ENCODE measurements at regions of chr11 and their contacts with region 1.

Region 1: DNA sequence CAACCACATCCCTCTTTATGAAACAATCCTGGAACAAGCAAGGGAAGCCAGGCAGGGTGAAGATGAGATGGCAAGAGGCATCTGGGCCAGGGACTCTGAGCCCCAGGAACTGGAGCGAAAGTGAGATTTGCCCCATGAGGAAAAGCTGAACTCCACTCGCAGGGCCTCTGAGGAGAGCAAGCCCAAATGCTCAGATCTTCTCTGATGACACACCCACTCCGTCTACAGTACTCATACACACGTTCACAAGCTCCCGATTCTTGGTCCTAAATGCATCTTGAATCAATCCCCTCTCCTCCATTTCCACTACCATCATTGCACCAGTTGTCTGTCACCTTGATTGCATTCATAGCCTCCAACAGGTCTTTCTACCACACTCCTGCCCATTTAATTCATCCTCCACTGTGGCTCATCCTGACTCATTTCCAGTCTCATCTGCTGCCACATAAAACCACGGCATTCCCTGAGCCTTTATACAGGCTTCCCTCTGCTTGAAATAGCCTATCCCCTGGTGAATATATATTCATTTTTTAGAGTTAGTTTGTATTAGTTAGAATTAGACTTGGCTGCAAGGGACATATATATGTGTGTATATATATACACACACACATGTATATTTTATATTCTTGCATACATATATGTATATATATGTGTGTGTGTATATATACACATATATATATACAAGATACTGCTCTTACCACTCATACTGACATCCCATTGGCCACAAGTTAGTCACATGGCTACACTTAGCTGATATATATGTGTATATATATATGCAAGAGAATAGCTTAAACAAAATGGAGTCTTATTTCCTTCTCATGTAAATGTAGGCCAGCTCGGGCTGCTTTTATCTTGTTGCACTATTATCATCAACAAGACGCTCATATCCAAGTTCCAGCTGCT is 1.4 kb upstream of the APOA5 start:
- DNase-seq: peak; percentile 73
- ATAC-seq: peak; percentile 21; the same call in 1 of the 2 replicates
- H3K4me3 ChIP-seq: no peak overlapping the region
- H3K27ac ChIP-seq: no peak overlapping the region
- H3K4me1 ChIP-seq: peaks cover 4% of the 10 kb centered on the region
- H3K27me3 ChIP-seq: no peaks in the 10 kb centered on the region
- CTCF ChIP-seq: no peak
- POLR2A ChIP-seq: no peak
- RAD21 ChIP-seq: no peak

Region 2: DNA sequence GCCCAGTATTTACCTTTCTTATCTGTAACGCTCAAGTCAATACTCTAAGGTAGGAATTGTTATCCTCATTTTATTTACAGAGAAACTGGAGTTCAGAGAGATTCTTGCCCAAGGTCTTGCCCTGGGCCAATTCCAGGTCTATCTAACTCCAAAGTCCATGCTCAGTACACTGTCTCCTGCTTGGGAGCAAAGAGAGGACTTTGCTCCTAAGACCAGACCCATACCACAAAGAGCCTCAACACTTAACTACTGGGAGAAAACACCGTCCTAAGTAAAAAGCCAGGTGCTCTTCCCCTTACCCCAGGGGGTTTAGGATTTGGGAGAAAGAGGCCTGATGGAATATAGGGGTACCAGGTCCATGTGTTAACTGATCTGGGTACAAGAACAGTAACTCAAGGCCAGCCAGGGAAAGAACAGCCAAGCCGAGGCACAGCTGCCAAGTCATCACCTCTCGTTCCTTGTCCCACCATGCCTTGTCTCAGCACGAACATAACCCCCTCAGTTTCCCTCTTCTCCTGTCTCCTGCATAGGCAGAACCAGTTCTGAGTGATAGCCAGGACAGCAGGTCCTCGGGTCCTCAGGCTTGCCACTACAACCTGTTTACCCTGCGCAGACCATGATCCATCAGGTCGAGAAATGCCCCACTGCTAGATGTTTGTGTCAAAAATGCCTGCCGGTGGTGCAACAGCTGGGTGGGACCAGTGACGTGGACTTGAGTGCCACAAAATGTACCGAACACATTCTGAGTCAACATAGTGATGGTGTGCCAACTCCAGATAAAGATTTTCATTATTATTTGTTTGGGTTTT is 15.5 kb after region 1 on chr11:
- CTCF ChIA-PET with region 1: no interaction called
- POLR2A ChIA-PET with region 1: no interaction called
- dilution Hi-C with region 1: no loop called
- in situ Hi-C with region 1: no loop called
- intact Hi-C with region 1: loop called (anchors 1 kb)
- DNase-seq: peak; percentile 32
- ATAC-seq: 0 out of 2 replicates have a peak, but pooled peaks have one; percentile 24
- H3K4me3 ChIP-seq: no peak overlapping the region
- H3K27ac ChIP-seq: no peak overlapping the region
- H3K4me1 ChIP-seq: no peaks in the 10 kb centered on the region
- H3K27me3 ChIP-seq: peaks cover 5% of the 10 kb centered on the region
- CTCF ChIP-seq: no peak
- POLR2A ChIP-seq: no peak
- RAD21 ChIP-seq: no peak

Region 3: GRCh38 chr11:117134431-117134830 is 341.3 kb after region 1 on chr11:
- CTCF ChIA-PET with region 1: no interaction called
- POLR2A ChIA-PET with region 1: no interaction called
- dilution Hi-C with region 1: no loop called
- in situ Hi-C with region 1: no loop called
- intact Hi-C with region 1: no loop called
- DNase-seq: no peak
- ATAC-seq: no peak
- H3K4me3 ChIP-seq: no peak overlapping the region
- H3K27ac ChIP-seq: no peak overlapping the region
- H3K4me1 ChIP-seq: no peaks in the 10 kb centered on the region
- H3K27me3 ChIP-seq: no peaks in the 10 kb centered on the region
- CTCF ChIP-seq: no peak
- POLR2A ChIP-seq: no peak
- RAD21 ChIP-seq: no peak